ENCODE measurements at regions of chr19 and their contacts with region 1.

Region 1: DNA sequence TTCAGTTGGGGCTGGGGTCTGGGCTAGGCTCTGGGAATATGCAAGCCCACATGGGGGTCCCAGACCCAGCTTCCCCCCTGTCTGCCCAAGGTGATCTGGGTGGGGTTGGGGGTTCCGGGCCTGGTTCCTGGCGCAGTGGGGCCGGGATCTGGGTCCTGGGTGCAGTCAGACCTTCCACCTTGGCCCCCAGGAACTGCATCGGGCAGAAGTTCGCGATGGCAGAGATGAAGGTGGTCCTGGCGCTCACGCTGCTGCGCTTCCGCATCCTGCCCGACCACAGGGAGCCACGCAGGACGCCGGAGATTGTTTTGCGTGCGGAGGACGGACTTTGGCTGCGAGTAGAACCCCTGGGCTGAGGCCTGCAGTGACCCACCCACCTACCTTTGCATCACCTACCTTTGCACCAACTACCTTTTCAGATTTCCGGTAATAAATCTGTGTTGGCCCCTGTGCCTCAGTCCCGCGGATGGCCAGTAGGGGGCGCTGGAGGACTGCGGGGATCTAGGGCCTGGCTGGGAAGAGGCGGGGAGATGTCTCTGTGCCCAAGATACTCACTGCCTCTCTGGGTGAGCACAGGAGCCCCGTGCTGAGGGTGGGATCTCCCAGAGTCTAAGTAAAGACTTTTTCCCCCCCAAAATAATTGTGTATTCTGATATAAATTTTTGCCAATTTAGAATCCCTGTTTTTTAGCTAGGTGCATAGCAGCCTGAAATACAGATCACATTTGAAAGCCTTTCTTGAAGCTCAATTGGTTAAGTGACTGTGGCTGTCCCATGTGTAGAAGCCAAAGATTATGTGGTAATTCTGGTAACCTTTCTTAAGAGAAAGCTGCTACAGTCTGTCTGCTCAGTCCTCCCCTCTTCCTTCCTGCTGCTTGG is 11.5 kb upstream of the CYP4F3 start:
- DNase-seq: peak; percentile 84
- CTCF ChIP-seq: peak; percentile 93

Region 2: GRCh38 chr19:15584541-15585115 is 44.6 kb before region 1 on chr19:
- in situ Hi-C with region 1: no loop called
- DNase-seq: peak; percentile 84
- CTCF ChIP-seq: peak; percentile 99

Region 3: DNA sequence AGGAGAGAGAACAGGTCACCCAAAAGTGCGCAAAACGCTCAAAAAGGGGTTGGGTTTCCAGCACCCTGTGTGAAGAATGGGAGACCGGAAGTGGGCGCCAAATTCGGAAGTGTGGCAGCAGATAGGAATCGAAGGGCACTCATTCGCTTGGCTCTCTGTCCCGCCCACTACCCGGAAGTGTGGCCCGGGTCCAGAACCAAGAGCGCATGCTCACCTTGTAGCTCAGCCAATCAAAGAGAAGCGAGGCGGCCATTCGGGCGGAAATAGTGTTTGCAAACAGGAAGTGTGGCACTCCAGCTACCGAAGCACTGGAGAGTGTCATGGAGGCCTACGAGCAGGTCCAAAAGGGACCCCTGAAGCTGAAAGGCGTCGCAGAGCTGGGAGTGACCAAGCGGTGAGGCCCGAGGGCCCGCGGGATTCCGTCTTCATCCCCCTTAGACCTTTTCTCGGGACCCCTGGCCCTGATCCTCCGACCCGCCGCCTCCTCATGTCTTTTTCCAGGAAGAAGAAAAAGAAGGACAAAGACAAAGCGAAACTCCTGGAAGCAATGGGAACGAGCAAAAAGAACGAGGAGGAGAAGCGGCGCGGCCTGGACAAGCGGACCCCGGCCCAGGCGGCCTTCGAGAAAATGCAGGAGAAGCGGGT is 556.0 kb after region 1 on chr19 and contains the start of gene FAM32A:
- in situ Hi-C with region 1: loop called (anchors 10 kb)
- DNase-seq: peak; percentile 97
- CTCF ChIP-seq: no peak

Measured in GM13977 (cell line).